OCI-LY7 (cell line): ENCODE measurements at regions of chrX and their contacts with region 1.

Region 1: GRCh38 chrX:65581661-65582339 is 47.2 kb upstream of the LAS1L start:
- DNase-seq: peak; percentile 63
- H3K4me3 ChIP-seq: no peak overlapping the region
- H3K27ac ChIP-seq: no peak overlapping the region
- H3K4me1 ChIP-seq: no peaks in the 10 kb centered on the region
- CTCF ChIP-seq: peak; percentile 80

Region 2: DNA sequence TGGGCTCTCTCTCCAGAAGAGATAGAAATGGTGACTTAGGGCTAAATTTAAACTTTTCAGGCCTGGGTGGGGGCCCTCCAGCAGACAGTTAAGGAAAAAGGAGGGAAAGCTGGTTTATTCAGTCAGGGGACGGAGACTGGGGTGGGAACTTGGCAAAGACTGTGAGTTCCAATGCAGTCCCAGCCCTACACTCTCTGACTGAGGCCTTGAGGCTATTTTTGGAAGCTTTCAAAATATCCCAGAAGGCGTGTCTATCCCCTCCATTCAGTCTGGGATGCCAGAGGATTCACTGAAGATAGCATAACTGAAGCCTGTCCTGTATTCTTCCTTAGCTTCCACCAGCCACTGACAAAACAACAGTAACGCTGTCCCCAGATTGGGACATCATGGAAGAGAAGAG is 53.6 kb after region 1 on chrX:
- CTCF ChIA-PET with region 1: no interaction called
- POLR2A ChIA-PET with region 1: no interaction called
- intact Hi-C with region 1: no loop called
- DNase-seq: no peak
- H3K4me3 ChIP-seq: no peak overlapping the region
- H3K27ac ChIP-seq: no peak overlapping the region
- H3K4me1 ChIP-seq: no peaks in the 10 kb centered on the region
- CTCF ChIP-seq: no peak

Region 3: DNA sequence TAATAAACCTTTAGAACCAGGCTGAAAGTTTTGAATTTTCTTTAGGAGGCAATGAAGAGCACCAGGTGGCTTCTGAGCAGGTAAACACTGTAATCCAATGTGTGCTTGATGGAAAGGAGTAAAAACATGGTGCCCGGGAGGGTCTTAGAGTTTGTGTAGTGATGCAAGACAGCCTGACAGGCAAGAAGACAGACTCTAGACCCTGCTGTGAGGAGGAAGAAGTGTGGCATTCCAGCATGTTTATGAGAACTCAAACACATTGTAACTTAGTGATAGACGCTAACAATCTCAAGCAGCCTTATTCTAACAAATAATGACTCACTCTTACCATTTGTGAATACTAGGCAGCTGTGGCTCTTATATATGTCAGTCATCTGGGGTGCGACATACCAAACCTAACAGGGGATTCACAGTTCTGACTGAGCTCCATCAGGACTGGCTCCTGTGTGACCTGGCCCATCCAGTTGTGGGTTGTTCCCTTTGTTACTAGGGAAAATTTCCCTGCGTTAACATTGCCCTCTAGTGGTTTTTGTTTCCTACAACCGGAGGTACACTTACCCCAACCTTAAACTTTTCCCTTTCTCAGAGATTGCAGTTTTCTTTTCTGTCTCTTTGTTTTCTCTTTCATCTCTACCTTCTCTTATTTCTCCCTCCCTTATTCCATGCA is 404.3 kb after region 1 on chrX:
- CTCF ChIA-PET with region 1: no interaction called
- POLR2A ChIA-PET with region 1: no interaction called
- intact Hi-C with region 1: loop called (anchors 1 kb)
- DNase-seq: peak; percentile 67
- H3K4me3 ChIP-seq: no peak overlapping the region
- H3K27ac ChIP-seq: no peak overlapping the region
- H3K4me1 ChIP-seq: peaks cover 6% of the 10 kb centered on the region
- CTCF ChIP-seq: peak; percentile 76

Region 4: DNA sequence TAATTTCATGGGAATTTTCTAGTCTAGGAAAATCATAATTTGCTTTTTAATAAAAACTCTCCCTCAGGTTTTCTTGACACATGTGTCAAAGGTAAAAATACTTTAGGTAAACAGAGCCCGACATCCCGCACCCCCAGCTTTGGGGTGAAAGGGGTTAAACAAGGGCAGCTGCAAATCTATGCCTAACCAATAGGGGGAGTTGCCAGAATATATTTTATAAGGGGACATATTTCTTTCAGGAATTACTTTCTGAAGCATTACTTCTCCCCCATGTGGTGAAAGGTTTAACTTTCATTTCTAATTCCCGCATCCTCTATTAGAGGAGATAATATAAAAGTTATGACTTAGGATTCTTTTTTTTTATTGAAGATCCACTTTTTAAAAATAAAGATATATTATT is 528.3 kb after region 1 on chrX:
- CTCF ChIA-PET with region 1: no interaction called
- POLR2A ChIA-PET with region 1: no interaction called
- intact Hi-C with region 1: loop called (anchors 2 kb)
- DNase-seq: peak; percentile 62
- H3K4me3 ChIP-seq: no peak overlapping the region
- H3K27ac ChIP-seq: no peak overlapping the region
- H3K4me1 ChIP-seq: no peaks in the 10 kb centered on the region
- CTCF ChIP-seq: peak; percentile 83

Region 5: GRCh38 chrX:66731398-66731797 is 1149.6 kb after region 1 on chrX:
- CTCF ChIA-PET with region 1: no interaction called
- POLR2A ChIA-PET with region 1: no interaction called
- intact Hi-C with region 1: loop called (anchors 5 kb)
- DNase-seq: peak; percentile 45
- H3K4me3 ChIP-seq: no peak overlapping the region
- H3K27ac ChIP-seq: no peak overlapping the region
- H3K4me1 ChIP-seq: no peaks in the 10 kb centered on the region
- CTCF ChIP-seq: peak; percentile 69